Activated CD4-positive, alpha-beta memory T cell treated with anti-CD3 and anti-CD28 coated beads for 36 hours (primary cell): ENCODE measurements at regions of chr10 and their contacts with region 1.

Region 1: DNA sequence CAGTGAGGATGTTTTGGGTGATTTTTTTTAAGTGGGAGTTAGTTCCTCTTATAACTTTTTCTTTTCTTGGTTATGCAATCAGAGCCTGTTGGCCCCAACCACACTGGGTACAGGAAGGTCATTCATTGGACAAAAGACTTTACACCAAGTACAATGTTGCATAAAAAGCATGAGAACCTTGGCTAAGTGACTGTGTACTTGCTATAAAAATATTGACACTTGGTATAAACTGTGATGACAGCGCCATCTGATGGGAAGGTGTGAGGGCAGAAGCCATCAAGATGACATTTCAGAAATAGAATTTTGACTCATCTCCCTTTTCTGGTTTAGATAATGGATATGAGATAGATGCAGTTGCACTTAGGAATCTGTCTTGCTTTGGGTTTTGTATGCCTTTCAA is 126.4 kb upstream of the CCDC6 start:
- DNase-seq: peak; percentile 67
- H3K4me3 Mint-ChIP-seq: no peak overlapping the region
- H3K27ac Mint-ChIP-seq: no peak overlapping the region
- H3K4me1 Mint-ChIP-seq: peaks cover 10% of the 10 kb centered on the region
- H3K27me3 Mint-ChIP-seq: no peaks in the 10 kb centered on the region

Region 2: GRCh38 chr10:58531084-58531695 is 1501.5 kb before region 1 on chr10:
- CTCF ChIA-PET with region 1: no interaction called
- POLR2A ChIA-PET with region 1: no interaction called
- intact Hi-C with region 1: loop called (anchors 5 kb)
- DNase-seq: peak; percentile 60
- H3K4me3 Mint-ChIP-seq: no peak overlapping the region
- H3K27ac Mint-ChIP-seq: no peak overlapping the region
- H3K4me1 Mint-ChIP-seq: peaks cover 2% of the 10 kb centered on the region
- H3K27me3 Mint-ChIP-seq: peaks cover 7% of the 10 kb centered on the region

Region 3: DNA sequence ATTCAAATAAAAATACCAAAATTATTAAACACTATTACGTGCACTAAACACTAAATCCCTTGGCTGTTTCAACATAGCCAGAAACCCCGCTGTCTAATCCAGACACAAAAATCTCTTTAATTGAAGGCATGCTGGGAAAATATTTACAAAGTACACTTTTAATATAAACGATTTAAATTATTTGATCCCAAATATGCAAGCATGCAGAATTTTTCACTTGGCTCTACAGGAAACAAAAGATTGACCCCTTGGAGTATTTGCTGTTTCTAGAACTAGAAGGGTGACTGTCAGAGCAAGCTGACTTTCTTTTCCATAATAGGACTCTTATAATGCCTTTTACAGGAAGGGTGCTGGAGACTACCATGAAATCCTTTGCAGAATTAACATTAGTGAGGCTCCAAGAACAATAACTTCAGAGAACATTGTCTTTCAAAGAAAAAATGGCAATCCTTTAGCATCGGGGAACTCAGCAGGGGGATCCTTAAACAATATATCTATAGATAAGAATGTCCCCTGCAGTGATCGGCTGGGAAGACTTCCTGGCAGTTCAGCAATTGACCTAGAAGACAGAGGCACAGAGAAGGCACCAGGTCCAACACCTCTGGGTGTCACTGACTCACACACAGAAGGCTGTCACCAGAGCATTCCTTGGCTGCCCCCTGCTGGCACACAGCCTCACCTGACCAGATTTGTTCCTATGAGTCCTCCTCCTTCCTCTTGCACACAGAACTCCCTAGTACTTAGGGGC is 223.7 kb before region 1 on chr10:
- CTCF ChIA-PET with region 1: interaction called, 3 read pairs
- POLR2A ChIA-PET with region 1: no interaction called
- intact Hi-C with region 1: loop called (anchors 2 kb)
- DNase-seq: peak; percentile 84
- H3K4me3 Mint-ChIP-seq: no peak overlapping the region
- H3K27ac Mint-ChIP-seq: no peak overlapping the region
- H3K4me1 Mint-ChIP-seq: peaks cover 3% of the 10 kb centered on the region
- H3K27me3 Mint-ChIP-seq: no peaks in the 10 kb centered on the region

Region 4: DNA sequence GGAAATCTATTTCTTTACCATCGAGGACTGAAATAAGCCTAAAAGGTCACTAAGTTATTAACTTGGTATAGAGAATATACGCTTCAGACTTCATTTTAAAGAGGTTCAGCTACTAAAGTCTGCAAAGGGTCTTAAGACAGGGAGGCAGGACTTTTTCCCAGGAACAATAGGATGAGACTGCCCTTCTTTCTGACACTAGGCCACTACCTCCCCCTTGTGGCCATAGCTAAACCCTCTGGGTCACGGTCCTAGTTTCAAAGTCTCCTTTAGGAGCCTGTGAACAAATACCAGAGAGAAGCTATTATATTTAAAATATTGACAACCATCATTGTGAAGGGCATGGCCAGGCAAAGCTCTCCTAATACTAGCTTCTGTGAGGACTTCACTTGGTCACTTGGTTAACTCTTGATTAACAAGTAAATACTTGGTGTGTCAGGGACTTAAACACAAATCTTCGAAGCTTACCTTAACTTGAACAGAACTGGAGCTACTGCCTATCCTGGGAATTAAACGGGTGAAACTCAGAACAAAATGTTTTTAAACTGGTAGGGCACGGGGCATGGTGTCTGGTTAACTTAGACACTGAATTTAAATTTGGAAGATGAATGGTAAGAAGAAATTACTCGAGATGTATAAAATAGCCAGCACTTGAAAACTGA is 202.0 kb before region 1 on chr10:
- CTCF ChIA-PET with region 1: interaction called, 3 read pairs
- POLR2A ChIA-PET with region 1: no interaction called
- intact Hi-C with region 1: loop called (anchors 5 kb)
- DNase-seq: peak; percentile 32
- H3K4me3 Mint-ChIP-seq: no peak overlapping the region
- H3K27ac Mint-ChIP-seq: no peak overlapping the region
- H3K4me1 Mint-ChIP-seq: peaks cover 52% of the 10 kb centered on the region
- H3K27me3 Mint-ChIP-seq: no peaks in the 10 kb centered on the region

Region 5: GRCh38 chr10:59865101-59865500 is 167.6 kb before region 1 on chr10:
- CTCF ChIA-PET with region 1: interaction called, 5 read pairs
- POLR2A ChIA-PET with region 1: no interaction called
- intact Hi-C with region 1: loop called (anchors 1 kb)
- DNase-seq: no peak
- H3K4me3 Mint-ChIP-seq: peak overlapping the region; percentile 13
- H3K27ac Mint-ChIP-seq: peak overlapping the region; percentile 34
- H3K4me1 Mint-ChIP-seq: peaks cover 55% of the 10 kb centered on the region
- H3K27me3 Mint-ChIP-seq: no peaks in the 10 kb centered on the region

Region 6: DNA sequence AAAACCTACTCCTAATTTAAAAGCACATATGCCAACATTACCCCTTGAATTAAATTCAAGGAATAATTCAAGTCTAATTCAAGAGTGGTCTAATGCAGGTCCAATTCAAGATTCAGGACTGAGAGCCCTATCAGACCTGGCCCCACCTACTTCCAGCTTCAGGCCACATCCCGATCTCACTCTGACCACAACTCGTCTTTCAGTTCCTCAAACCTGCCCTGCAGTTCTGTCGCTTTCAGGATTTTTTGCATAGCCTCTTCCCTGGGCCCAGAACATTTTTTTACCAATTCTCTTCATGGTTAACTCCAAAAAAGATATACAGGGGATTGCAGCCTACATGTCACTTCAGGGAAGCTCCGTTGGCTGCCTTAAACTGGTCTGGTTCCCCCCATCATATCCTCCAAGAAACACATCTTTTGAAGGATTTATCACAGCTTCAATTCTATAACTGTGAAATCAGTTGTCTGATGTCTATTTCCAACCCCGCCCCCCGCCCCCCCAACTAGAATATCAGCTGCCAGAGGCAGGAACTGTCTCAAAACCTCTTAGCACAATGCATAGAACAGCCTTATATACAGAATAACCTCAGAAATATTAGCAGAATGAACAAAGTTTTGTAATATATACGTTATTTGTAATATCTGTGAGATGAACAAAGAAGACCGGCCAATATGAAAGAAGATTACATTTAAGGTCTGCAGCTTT is 147.1 kb before region 1 on chr10:
- CTCF ChIA-PET with region 1: no interaction called
- POLR2A ChIA-PET with region 1: no interaction called
- intact Hi-C with region 1: loop called (anchors 1 kb)
- DNase-seq: peak; percentile 44
- H3K4me3 Mint-ChIP-seq: no peak overlapping the region
- H3K27ac Mint-ChIP-seq: peak overlapping the region; percentile 96
- H3K4me1 Mint-ChIP-seq: peaks cover 87% of the 10 kb centered on the region
- H3K27me3 Mint-ChIP-seq: no peaks in the 10 kb centered on the region

Region 7: DNA sequence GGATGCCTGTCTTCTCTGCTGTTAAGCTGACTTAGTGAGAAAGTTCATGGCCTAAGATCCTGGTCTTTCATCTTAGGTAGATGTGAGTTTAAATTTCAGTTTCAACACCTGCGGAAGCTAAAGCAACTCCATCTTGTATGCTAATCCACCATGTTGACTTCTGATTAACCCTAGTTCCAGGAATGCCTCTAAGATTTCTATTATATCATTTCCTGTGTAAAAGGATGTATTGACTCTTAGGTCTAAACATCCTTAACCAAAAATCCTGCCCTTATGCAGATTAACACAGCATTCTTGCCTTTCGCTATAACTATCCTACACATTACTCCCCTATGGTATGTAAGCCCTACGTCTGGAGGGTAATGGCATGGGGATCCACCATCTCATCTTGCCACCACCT is 32.0 kb before region 1 on chr10:
- CTCF ChIA-PET with region 1: no interaction called
- POLR2A ChIA-PET with region 1: no interaction called
- intact Hi-C with region 1: loop called (anchors 2 kb)
- DNase-seq: peak; percentile 12
- H3K4me3 Mint-ChIP-seq: no peak overlapping the region
- H3K27ac Mint-ChIP-seq: peak overlapping the region; percentile 55
- H3K4me1 Mint-ChIP-seq: peaks cover 18% of the 10 kb centered on the region
- H3K27me3 Mint-ChIP-seq: peaks cover 3% of the 10 kb centered on the region